Activated CD4-positive, alpha-beta memory T cell treated with anti-CD3 and anti-CD28 coated beads for 36 hours (primary cell): ENCODE measurements at regions of chr1 and their contacts with region 1.

Region 1: DNA sequence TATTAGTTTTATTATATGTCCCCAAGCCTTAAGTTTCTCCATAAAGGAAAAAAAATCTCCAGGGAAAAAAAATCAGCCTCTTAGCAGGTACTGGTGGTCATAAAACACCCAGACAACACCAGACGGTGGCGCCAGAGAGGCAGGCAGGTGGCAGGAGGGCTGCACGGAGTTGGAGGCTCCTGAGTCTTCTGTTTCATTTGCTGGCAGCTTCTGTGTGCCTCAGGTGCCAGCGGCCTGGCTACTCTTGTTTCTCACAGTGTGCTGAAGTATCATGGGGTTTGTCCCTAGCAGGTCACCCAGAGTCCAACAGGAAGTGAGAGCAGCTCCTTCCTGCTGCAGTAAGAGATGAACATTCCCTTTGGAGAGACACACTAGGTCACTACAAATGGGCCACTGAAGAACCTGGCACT is 123.3 kb upstream of the GADD45A start:
- DNase-seq: peak; percentile 90
- H3K4me3 Mint-ChIP-seq: no peak overlapping the region
- H3K27ac Mint-ChIP-seq: no peak overlapping the region
- H3K4me1 Mint-ChIP-seq: peaks cover 6% of the 10 kb centered on the region
- H3K27me3 Mint-ChIP-seq: peaks cover 3% of the 10 kb centered on the region

Region 2: DNA sequence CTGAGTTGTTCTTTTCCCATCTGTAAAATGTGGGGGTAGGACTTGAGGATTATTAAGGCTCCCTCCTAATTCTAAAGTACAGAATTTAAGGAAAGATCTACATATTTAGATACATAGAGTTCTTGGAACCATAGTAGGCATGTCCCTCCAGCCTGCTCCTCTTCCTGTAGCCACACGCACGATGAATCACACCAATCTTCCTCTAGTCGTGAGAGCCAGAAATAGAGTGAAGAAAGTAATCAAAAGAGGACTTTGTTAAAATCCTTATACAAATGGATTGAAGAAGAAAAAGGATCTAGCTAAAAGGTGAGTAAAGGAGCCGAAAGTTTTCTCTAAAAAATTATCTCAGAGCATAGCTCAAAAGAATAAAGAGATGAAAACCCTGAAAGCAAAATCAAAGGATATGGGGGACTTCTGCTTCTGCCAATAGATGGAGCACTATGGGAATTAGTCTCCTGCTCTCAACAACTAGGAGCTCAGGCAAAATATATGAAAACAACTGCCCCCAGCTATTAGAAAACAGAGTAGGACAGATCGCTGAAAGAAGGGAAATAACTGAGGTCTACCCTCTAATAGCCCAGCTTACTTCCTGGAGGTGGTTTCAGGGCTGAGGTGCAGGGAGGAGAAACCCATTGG is 435.5 kb before region 1 on chr1:
- CTCF ChIA-PET with region 1: no interaction called
- POLR2A ChIA-PET with region 1: no interaction called
- intact Hi-C with region 1: no loop called
- DNase-seq: no peak
- H3K4me3 Mint-ChIP-seq: no peak overlapping the region
- H3K27ac Mint-ChIP-seq: no peak overlapping the region
- H3K4me1 Mint-ChIP-seq: no peaks in the 10 kb centered on the region
- H3K27me3 Mint-ChIP-seq: no peaks in the 10 kb centered on the region

Region 3: DNA sequence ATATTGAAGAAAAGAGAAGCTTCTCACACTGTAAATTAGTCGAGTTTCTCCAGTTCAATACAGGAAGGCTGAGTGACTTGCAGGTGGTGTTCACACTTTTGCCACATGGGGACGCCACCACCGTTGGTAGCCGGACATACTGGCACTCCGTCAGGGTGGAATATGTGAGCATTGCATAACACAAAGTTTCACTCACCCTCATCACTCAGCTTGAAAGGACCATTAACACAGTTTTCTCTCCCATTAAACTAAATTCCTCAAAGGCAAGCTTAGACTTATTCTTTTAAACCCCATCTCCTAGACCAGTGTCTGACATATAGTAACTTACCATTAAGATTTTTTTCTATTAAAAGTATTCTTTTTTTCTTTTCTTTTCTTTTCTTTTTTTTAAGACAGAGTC is 26.2 kb before region 1 on chr1:
- CTCF ChIA-PET with region 1: interaction called, 26 read pairs
- POLR2A ChIA-PET with region 1: no interaction called
- intact Hi-C with region 1: loop called (anchors 1 kb)
- DNase-seq: peak; percentile 79
- H3K4me3 Mint-ChIP-seq: no peak overlapping the region
- H3K27ac Mint-ChIP-seq: no peak overlapping the region
- H3K4me1 Mint-ChIP-seq: no peaks in the 10 kb centered on the region
- H3K27me3 Mint-ChIP-seq: peaks cover 4% of the 10 kb centered on the region

Region 4: DNA sequence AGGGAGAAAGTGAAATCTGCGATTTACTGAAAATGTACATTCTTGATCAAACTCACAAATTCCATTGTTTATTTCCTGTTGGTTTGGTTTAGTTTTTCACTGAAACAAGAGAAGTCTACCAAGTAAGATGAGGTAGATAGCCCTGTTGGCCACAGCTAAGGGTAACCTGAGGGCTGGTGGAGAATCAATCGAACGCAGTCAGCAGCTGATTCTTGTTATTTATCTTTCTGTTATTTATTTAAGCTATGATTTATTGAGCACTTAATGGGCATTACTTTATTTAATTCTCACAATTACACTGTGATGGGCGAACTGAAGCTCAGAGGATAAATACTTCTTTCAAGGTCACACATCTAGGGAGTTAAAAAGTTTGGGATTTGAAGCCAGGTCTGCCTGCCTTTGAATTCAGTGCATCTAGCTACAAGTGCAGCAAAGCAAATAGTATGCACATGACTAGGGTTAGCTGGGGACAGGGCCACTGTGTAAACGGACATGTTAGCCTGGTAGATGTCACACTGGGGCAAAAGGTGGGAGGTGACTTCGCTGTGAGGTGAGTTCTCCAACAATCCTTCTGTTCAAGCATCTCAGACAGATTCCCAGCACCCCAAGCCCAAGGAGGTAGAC is 16.8 kb after region 1 on chr1:
- CTCF ChIA-PET with region 1: interaction called, 37 read pairs
- POLR2A ChIA-PET with region 1: no interaction called
- intact Hi-C with region 1: no loop called
- DNase-seq: no peak
- H3K4me3 Mint-ChIP-seq: no peak overlapping the region
- H3K27ac Mint-ChIP-seq: no peak overlapping the region
- H3K4me1 Mint-ChIP-seq: no peaks in the 10 kb centered on the region
- H3K27me3 Mint-ChIP-seq: no peaks in the 10 kb centered on the region

Region 5: GRCh38 chr1:67599085-67599484 is 37.4 kb after region 1 on chr1:
- CTCF ChIA-PET with region 1: no interaction called
- POLR2A ChIA-PET with region 1: no interaction called
- intact Hi-C with region 1: no loop called
- DNase-seq: no peak
- H3K4me3 Mint-ChIP-seq: no peak overlapping the region
- H3K27ac Mint-ChIP-seq: no peak overlapping the region
- H3K4me1 Mint-ChIP-seq: no peaks in the 10 kb centered on the region
- H3K27me3 Mint-ChIP-seq: peaks cover 7% of the 10 kb centered on the region

Region 6: GRCh38 chr1:67743072-67743725 is 181.5 kb after region 1 on chr1:
- CTCF ChIA-PET with region 1: interaction called, 10 read pairs
- POLR2A ChIA-PET with region 1: no interaction called
- intact Hi-C with region 1: no loop called
- DNase-seq: no peak
- H3K4me3 Mint-ChIP-seq: no peak overlapping the region
- H3K27ac Mint-ChIP-seq: no peak overlapping the region
- H3K4me1 Mint-ChIP-seq: peaks cover 6% of the 10 kb centered on the region
- H3K27me3 Mint-ChIP-seq: peaks cover 1% of the 10 kb centered on the region

Region 7: DNA sequence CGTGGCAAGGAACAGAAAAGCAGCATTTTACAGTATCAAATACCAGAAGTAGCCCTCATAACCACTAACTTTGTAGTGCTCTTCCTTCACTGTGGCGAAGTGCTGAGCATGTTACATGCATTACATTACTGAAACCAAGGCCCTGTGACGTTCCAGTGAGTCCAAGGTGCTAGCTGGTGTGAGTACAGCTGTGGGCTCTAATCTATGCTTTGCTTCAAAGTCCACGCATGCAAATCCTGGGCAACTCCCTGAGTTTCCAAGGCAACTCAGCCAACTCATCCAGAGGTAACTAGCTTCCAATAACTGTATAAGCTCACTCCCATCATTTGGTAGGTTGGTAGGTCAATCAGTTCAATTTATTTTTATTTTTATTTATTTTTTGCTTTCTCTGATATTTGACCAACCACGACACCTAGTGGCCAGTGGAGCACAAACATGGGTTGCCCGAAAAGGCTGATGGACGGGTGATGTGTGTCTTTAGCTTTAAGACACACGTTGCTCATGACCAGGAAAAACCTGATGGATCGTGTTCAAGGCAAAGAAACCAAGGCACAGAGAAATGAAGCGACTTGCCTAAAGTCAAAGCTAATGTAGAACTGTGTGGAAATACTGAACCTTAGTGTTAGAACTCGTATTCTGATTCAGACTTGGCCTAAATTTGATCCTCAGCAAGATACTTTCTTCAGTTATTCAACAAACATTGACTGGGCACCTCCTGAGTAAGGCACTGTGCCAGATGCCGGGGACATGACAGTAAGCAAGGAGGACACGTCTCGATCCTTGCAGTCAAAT is 198.5 kb after region 1 on chr1:
- CTCF ChIA-PET with region 1: interaction called, 281 read pairs
- POLR2A ChIA-PET with region 1: interaction called, 5 read pairs
- intact Hi-C with region 1: loop called (anchors 1 kb)
- DNase-seq: peak; percentile 65
- H3K4me3 Mint-ChIP-seq: no peak overlapping the region
- H3K27ac Mint-ChIP-seq: no peak overlapping the region
- H3K4me1 Mint-ChIP-seq: no peaks in the 10 kb centered on the region
- H3K27me3 Mint-ChIP-seq: peaks cover 17% of the 10 kb centered on the region